ENCODE measurements at regions of chr2 and their contacts with region 1.

Region 1: DNA sequence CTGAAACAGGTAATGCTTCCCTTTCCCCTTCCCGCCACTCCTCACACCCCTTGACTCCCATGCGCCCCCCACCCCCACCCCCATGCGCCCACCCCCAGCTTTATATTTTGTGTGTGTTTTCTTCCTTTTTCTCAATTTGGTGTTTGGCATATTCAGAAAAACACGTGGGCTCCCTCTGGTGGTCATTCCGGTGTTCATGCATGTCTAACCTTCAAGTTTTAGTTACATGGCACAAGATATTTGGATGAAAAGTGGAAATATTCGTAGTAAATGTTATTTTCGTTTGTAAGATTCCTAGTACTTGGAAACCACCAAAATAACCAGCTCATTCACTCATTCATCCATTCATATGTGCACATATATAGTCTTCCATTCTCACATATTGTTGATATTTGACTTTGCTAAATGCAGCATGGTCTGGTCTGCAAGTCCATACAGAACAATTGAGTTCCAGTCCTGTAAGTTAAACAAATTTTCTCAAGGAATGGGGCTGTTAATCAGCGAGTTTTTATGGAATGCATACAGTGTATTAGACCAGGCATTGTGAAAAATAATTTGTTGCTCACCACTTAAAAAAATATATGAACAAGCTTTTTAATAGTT is 143.6 kb upstream of the MAP3K20 start:
- DNase-seq: no peak
- ATAC-seq: peak; percentile 69
- H3K4me3 ChIP-seq: no peak overlapping the region
- H3K27ac ChIP-seq: no peak overlapping the region
- H3K4me1 ChIP-seq: no peaks in the 10 kb centered on the region
- H3K27me3 ChIP-seq: no peaks in the 10 kb centered on the region; a peak in 1 of 4 replicates
- CTCF ChIP-seq: peak; percentile 64 to 72 (median 72); a peak in 5 of 6 replicates
- EP300 ChIP-seq: no peak
- POLR2A ChIP-seq: no peak
- RAD21 ChIP-seq: peak; percentile 93

Region 2: GRCh38 chr2:172613040-172613439 is 319.0 kb before region 1 on chr2:
- CTCF ChIA-PET with region 1: no interaction called
- POLR2A ChIA-PET with region 1: no interaction called
- RAD21 ChIA-PET with region 1: no interaction called
- SMC1A ChIA-PET with region 1: no interaction called
- in situ Hi-C with region 1: no loop called
- intact Hi-C with region 1: no loop called
- DNase-seq: no peak
- ATAC-seq: no peak
- H3K4me3 ChIP-seq: no peak overlapping the region
- H3K27ac ChIP-seq: no peak overlapping the region
- H3K4me1 ChIP-seq: no peaks in the 10 kb centered on the region; the same call in 1 of the 2 replicates
- H3K27me3 ChIP-seq: no peaks in the 10 kb centered on the region
- CTCF ChIP-seq: no peak
- EP300 ChIP-seq: no peak
- POLR2A ChIP-seq: no peak
- RAD21 ChIP-seq: no peak

Region 3: DNA sequence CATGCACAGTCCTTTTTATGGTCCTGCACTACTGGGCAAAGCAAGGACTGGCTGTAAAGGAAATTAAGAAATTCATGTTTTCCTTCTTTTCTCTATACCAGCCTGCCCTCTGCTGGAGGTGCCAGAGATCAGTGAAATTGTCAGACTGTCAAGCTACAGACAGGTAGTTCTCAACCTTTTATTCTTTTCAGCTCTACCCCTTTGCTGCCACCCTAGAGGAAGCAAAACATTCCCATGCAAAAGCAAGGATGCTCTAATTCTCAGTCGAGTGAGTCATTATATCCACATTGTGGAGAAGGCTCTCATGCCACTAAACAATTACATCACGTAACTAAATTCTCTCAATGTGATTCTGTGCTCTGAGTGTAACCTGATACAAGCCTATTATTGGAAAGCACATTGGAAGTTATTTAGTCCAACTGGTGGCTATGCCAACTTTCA is 221.4 kb before region 1 on chr2:
- CTCF ChIA-PET with region 1: no interaction called
- POLR2A ChIA-PET with region 1: no interaction called
- RAD21 ChIA-PET with region 1: no interaction called
- SMC1A ChIA-PET with region 1: no interaction called
- in situ Hi-C with region 1: no loop called
- intact Hi-C with region 1: loop called (anchors 10 kb)
- DNase-seq: no peak
- ATAC-seq: peak; percentile 55
- H3K4me3 ChIP-seq: no peak overlapping the region
- H3K27ac ChIP-seq: no peak overlapping the region
- H3K4me1 ChIP-seq: no peaks in the 10 kb centered on the region
- H3K27me3 ChIP-seq: peaks cover 0 to 6% of the 10 kb centered on the region in 2 experiments; a peak in 2 of 4 replicates
- CTCF ChIP-seq: peak; percentile 61 to 67 (median 63); a peak in 5 of 6 replicates
- EP300 ChIP-seq: no peak
- POLR2A ChIP-seq: no peak
- RAD21 ChIP-seq: peak; percentile 75

Region 4: DNA sequence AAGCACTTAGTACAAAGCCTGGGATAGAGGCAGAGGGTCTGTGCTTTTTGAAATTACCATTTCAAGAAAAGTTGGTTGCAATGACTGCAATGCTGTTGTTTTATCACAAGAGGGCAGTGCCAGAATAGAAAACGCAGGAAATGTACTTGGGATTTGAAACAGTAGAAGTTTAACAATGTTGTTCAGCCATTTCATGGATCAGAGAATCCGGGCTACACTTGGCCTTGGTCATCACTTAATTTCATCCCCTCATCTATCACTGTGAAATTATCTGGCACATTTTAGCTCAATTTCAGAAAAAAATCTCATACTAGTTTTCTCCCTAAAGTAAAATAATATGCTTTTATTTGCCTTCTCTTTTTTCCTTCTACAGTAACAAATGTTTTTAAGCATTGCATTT is 125.5 kb before region 1 on chr2:
- CTCF ChIA-PET with region 1: interaction called, 59 read pairs
- POLR2A ChIA-PET with region 1: no interaction called
- RAD21 ChIA-PET with region 1: interaction called, 7 read pairs
- SMC1A ChIA-PET with region 1: interaction called, 28 read pairs
- in situ Hi-C with region 1: loop called (anchors 25 kb)
- intact Hi-C with region 1: loop called (anchors 1 kb)
- DNase-seq: no peak
- ATAC-seq: peak; percentile 44; the same call in 2 of the 3 replicates
- H3K4me3 ChIP-seq: no peak overlapping the region
- H3K27ac ChIP-seq: no peak overlapping the region
- H3K4me1 ChIP-seq: no peaks in the 10 kb centered on the region
- H3K27me3 ChIP-seq: no peaks in the 10 kb centered on the region; a peak in 1 of 4 replicates
- CTCF ChIP-seq: peak; percentile 66 to 84 (median 80); a peak in 5 of 6 replicates
- EP300 ChIP-seq: no peak
- POLR2A ChIP-seq: no peak
- RAD21 ChIP-seq: peak; percentile 89

Region 5: DNA sequence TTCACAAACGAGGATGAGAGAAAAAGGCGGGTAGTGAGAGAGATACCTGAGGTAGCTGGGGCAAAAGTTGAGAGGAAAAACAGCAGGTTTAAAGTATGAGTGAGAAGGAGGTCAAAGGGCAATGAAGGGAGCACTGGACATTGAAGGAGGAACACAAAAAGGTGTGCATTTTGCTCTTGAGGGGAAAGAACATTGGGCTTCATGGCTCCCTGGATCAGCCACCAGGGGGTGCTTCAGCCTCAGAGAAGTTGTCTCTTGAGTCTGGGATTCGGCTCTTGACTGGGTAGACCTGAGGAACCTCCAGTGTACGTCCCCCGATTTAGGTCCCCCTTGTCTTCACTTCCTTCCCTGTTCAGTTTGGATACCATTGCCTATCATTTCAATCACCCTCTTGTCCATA is 67.8 kb before region 1 on chr2:
- CTCF ChIA-PET with region 1: interaction called, 34 read pairs
- POLR2A ChIA-PET with region 1: no interaction called
- RAD21 ChIA-PET with region 1: interaction called, 5 read pairs
- SMC1A ChIA-PET with region 1: interaction called, 10 read pairs
- in situ Hi-C with region 1: loop called (anchors 5 kb)
- intact Hi-C with region 1: loop called (anchors 1 kb)
- DNase-seq: peak; percentile 3
- ATAC-seq: peak; percentile 86
- H3K4me3 ChIP-seq: no peak overlapping the region
- H3K27ac ChIP-seq: no peak overlapping the region
- H3K4me1 ChIP-seq: no peaks in the 10 kb centered on the region
- H3K27me3 ChIP-seq: peaks cover 0 to 4% of the 10 kb centered on the region in 2 experiments; a peak in 1 of 4 replicates
- CTCF ChIP-seq: peak; percentile 66 to 80 (median 77)
- EP300 ChIP-seq: no peak
- POLR2A ChIP-seq: no peak
- RAD21 ChIP-seq: peak; percentile 83

Region 6: DNA sequence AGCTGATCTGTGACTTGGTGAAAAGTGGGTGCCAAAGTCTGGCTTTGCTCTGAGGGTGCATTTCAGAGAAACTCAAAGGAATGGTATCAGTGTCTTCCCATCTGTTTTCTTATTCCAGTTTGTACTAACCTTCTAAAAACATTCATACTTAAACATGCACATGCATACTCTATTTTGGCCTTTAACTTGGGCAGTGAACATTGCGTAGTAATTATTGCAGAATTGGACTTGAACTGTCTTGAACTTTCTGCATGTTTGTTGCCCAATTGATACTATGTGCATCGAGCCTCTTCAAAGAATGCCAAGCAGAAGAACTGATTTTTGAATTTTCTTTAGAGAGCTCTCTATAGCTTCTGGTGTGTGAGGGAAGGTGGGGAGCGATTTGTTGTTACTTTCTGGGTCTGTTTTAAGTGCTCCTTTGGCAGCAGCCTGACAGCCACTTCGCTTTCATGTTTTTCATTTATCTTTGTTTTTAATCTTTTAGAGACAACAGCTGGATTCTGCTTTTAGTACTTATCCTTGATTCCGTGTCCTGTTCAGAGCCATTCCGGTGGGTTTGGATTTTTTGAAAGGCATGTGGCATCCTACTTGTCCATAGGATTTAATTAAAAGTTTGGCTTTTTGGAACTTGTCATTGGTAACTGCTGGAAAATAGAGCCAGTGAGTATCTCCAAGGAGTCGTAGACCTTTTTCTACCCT is 37.2 kb before region 1 on chr2:
- CTCF ChIA-PET with region 1: interaction called, 11 read pairs
- POLR2A ChIA-PET with region 1: no interaction called
- RAD21 ChIA-PET with region 1: no interaction called
- SMC1A ChIA-PET with region 1: no interaction called
- in situ Hi-C with region 1: no loop called
- intact Hi-C with region 1: no loop called
- DNase-seq: no peak
- ATAC-seq: no peak
- H3K4me3 ChIP-seq: no peak overlapping the region
- H3K27ac ChIP-seq: no peak overlapping the region
- H3K4me1 ChIP-seq: no peaks in the 10 kb centered on the region
- H3K27me3 ChIP-seq: peaks cover 4% of the 10 kb centered on the region in 2 experiments; a peak in 3 of 4 replicates
- CTCF ChIP-seq: no peak
- EP300 ChIP-seq: no peak
- POLR2A ChIP-seq: no peak
- RAD21 ChIP-seq: no peak

Region 7: DNA sequence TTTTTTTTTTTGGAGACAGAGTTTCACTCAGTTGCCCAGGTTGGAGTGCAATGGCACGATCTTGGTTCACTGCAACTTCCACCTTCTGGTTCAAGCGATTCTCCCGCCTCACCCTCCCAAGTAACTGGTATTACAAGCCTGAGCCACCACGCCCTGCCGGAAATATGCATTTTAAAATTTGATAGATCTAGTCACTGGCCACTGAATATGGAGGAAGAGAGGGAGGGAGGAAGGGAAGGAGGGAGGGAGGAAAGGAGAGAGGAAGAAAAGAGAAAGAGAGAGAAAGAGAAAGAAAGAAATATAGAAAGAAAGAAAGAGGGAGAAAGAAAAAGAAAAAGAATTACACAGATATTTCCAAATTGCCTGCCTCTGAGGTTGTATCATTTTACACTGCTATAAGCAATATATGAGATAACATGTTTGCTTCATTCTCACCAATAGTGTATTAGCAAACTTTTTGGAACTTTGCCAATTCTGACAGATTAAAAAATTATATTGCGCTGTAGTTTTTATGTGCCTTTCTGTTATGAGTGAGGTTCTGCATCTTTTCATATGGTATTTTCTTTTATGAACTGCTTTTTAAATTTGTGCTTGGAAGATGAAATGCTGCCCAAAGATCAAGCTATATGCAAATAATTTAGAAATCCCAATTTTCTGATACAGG is 17.5 kb before region 1 on chr2:
- CTCF ChIA-PET with region 1: interaction called, 20 read pairs
- POLR2A ChIA-PET with region 1: no interaction called
- RAD21 ChIA-PET with region 1: interaction called, 3 read pairs
- SMC1A ChIA-PET with region 1: interaction called, 3 read pairs
- in situ Hi-C with region 1: no loop called
- intact Hi-C with region 1: no loop called
- DNase-seq: no peak
- ATAC-seq: no peak
- H3K4me3 ChIP-seq: no peak overlapping the region
- H3K27ac ChIP-seq: no peak overlapping the region
- H3K4me1 ChIP-seq: peaks cover 3% of the 10 kb centered on the region
- H3K27me3 ChIP-seq: no peaks in the 10 kb centered on the region
- CTCF ChIP-seq: no peak
- EP300 ChIP-seq: no peak
- POLR2A ChIP-seq: no peak
- RAD21 ChIP-seq: no peak

Region 8: GRCh38 chr2:172921532-172922236 is 10.3 kb before region 1 on chr2:
- CTCF ChIA-PET with region 1: interaction called, 20 read pairs
- POLR2A ChIA-PET with region 1: no interaction called
- RAD21 ChIA-PET with region 1: interaction called, 4 read pairs
- SMC1A ChIA-PET with region 1: interaction called, 5 read pairs
- in situ Hi-C with region 1: no loop called
- intact Hi-C with region 1: no loop called
- DNase-seq: no peak
- ATAC-seq: no peak
- H3K4me3 ChIP-seq: no peak overlapping the region
- H3K27ac ChIP-seq: no peak overlapping the region
- H3K4me1 ChIP-seq: peaks cover 10% of the 10 kb centered on the region
- H3K27me3 ChIP-seq: no peaks in the 10 kb centered on the region
- CTCF ChIP-seq: no peak
- EP300 ChIP-seq: no peak
- POLR2A ChIP-seq: no peak
- RAD21 ChIP-seq: no peak

Region 9: GRCh38 chr2:173027181-173028128 is 95.4 kb after region 1 on chr2:
- CTCF ChIA-PET with region 1: no interaction called
- POLR2A ChIA-PET with region 1: no interaction called
- RAD21 ChIA-PET with region 1: no interaction called
- SMC1A ChIA-PET with region 1: no interaction called
- in situ Hi-C with region 1: no loop called
- intact Hi-C with region 1: no loop called
- DNase-seq: peak; percentile 41
- ATAC-seq: peak; percentile 85
- H3K4me3 ChIP-seq: no peak overlapping the region
- H3K27ac ChIP-seq: no peak overlapping the region
- H3K4me1 ChIP-seq: no peaks in the 10 kb centered on the region
- H3K27me3 ChIP-seq: peaks cover 0 to 2% of the 10 kb centered on the region in 2 experiments; a peak in 2 of 4 replicates
- CTCF ChIP-seq: peak; percentile 84 to 95 (median 92)
- EP300 ChIP-seq: no peak
- POLR2A ChIP-seq: no peak
- RAD21 ChIP-seq: peak; percentile 98

Measured in GM12878 (cell line).